ENCODE measurements at regions of chr22 and their contacts with region 1.

Region 1: GRCh38 chr22:16917144-16918003 is 90.6 kb downstream of the GAB4 start:
- DNase-seq: peak; percentile 83
- ATAC-seq: no peak
- H3K4me3 Mint-ChIP-seq: no peak overlapping the region
- H3K27ac Mint-ChIP-seq: no peak overlapping the region
- H3K4me1 Mint-ChIP-seq: peaks cover 2% of the 10 kb centered on the region
- H3K27me3 Mint-ChIP-seq: peaks cover 13% of the 10 kb centered on the region
- CTCF ChIP-seq: peak; percentile 78

Region 2: GRCh38 chr22:16933291-16934282 is 16.2 kb after region 1 on chr22:
- CTCF ChIA-PET with region 1: no interaction called
- POLR2A ChIA-PET with region 1: no interaction called
- intact Hi-C with region 1: no loop called
- DNase-seq: no peak
- ATAC-seq: no peak
- H3K4me3 Mint-ChIP-seq: no peak overlapping the region
- H3K27ac Mint-ChIP-seq: no peak overlapping the region
- H3K4me1 Mint-ChIP-seq: no peaks in the 10 kb centered on the region
- H3K27me3 Mint-ChIP-seq: peaks cover 9% of the 10 kb centered on the region
- CTCF ChIP-seq: no peak

Region 3: DNA sequence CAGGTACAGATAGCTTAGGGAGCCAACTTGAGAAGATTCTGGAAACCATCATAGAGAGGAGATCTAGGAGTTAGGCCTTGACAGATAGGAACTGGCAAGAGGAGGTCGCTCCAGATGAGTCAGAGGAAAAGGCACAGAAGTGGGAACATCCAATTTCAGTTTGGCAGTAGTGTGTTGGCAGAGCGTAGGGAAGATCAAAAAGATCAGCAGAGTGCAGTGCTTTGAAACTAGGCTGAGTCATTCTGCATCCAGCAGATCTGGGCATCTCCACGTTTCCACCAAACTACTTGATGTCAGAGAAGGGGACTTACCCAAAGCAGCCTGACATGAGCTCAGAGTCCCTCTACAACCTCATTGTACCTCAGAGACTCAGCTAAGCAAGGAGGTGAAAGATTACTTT is 32.2 kb after region 1 on chr22:
- CTCF ChIA-PET with region 1: interaction called, 11 read pairs
- POLR2A ChIA-PET with region 1: no interaction called
- intact Hi-C with region 1: no loop called
- DNase-seq: peak; percentile 49
- ATAC-seq: peak; percentile 98
- H3K4me3 Mint-ChIP-seq: no peak overlapping the region
- H3K27ac Mint-ChIP-seq: no peak overlapping the region
- H3K4me1 Mint-ChIP-seq: peaks cover 9% of the 10 kb centered on the region
- H3K27me3 Mint-ChIP-seq: no peaks in the 10 kb centered on the region
- CTCF ChIP-seq: no peak

Region 4: DNA sequence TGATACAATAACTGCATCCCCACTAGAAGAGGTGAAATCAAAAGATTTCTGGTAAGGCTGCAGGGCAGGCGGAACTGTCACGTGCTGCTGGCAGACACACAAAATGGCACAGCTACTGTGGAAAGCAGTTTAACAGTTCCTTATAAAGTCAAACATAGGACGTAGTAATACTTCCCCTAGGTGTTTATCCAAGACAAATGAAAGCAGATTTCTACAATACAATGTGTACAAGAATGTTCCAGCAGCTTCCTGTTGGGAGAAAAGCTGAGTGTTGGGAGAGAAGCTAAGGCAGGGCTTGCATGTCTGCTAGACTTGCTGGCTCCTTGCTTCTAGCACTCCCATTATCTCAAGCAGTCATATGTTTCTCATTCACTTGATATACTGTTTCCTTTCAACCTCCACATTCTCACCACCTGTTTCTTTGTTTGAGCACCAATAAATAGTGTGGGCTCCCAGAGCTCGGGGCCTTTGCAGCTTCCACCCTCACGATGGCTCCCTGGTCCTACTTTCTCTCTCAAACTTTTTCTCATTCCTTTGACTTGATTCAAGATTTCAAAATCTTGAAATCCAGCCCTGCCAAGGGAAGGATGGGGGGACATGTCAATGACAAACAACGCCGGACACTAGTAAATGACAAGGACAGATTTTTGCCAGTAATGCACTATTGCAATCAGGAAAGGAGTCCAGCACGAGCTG is 146.2 kb after region 1 on chr22:
- CTCF ChIA-PET with region 1: interaction called, 36 read pairs
- POLR2A ChIA-PET with region 1: no interaction called
- intact Hi-C with region 1: loop called (anchors 10 kb)
- DNase-seq: no peak
- ATAC-seq: no peak
- H3K4me3 Mint-ChIP-seq: no peak overlapping the region
- H3K27ac Mint-ChIP-seq: no peak overlapping the region
- H3K4me1 Mint-ChIP-seq: peaks cover 5% of the 10 kb centered on the region
- H3K27me3 Mint-ChIP-seq: no peaks in the 10 kb centered on the region
- CTCF ChIP-seq: no peak

Measured in activated CD8-positive, alpha-beta T cell treated with anti-CD3 and anti-CD28 coated beads for 36 hours (primary cell).